Esophagus muscularis mucosa (tissue), 4 donors: ENCODE measurements at regions of chr6 and their contacts with region 1.

Region 1: GRCh38 chr6:2791124-2791974 is 26.2 kb downstream of the WRNIP1 start:
- DNase-seq: no peak
- H3K4me3 ChIP-seq: peak overlapping the region in 3 of 4 donors; percentile 3 to 27 (median 18)
- H3K27ac ChIP-seq: peak overlapping the region; percentile 73 to 85 (median 76)
- H3K4me1 ChIP-seq: peaks cover 25 to 44% (median 39%) of the 10 kb centered on the region in 4 donors
- H3K27me3 ChIP-seq: no peaks in the 10 kb centered on the region
- CTCF ChIP-seq: peak; percentile 72 to 83 (median 80)
- EP300 ChIP-seq: no peak
- POLR2A ChIP-seq: no peak

Region 2: DNA sequence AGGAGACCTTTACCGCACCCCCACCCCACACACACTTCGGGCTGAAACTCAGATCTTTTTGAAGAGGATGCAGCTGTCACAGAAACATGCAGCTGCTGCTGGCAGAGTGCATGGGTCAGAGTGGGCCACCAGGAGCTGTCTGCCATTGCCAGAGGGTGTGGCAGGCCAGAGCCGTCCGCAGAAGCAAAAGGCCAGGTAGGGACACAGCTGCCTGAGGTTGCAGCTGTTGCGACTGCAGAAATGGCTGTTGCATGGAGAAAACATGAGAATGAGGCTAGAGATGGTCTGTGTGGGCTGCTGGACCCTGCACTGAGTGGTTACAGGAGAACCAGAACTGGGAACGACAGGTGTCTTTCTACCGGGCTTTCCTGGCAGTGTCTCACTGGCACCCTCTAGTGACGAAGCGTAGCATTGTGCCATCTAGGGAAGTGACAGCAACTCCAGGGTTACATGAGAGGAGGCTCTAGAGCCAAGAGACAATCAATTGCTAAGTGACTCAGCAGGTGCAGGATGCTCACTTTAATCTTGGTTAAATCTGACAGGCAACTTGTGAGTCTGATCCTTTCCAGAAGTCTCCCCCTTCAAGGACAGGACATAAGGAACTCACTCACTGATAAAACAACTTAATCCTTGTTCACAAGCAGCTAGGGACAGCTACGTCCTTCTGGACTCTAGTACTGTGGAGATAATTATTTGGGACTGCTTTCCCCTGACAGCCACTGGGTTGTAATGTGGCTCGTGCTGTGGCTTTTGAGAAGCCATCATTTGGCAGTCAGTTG is 140.8 kb after region 1 on chr6:
- intact Hi-C with region 1: loop called (anchors 5 kb)
- DNase-seq: peak; percentile 95
- H3K4me3 ChIP-seq: peak overlapping the region in 2 of 4 donors; percentile 8 to 35
- H3K27ac ChIP-seq: no peak overlapping the region
- H3K4me1 ChIP-seq: peaks cover 4 to 9% (median 8%) of the 10 kb centered on the region in 4 donors
- H3K27me3 ChIP-seq: no peaks in the 10 kb centered on the region
- CTCF ChIP-seq: peak; percentile 85 to 97 (median 89)
- EP300 ChIP-seq: no peak
- POLR2A ChIP-seq: no peak